Panc1 (cell line): ENCODE measurements at regions of chr20 and their contacts with region 1.

Region 1: GRCh38 chr20:49447946-49448809 is 34.3 kb downstream of the KCNB1 start:
- DNase-seq: no peak
- ATAC-seq: no peak
- H3K4me3 ChIP-seq: no peak overlapping the region
- H3K27ac ChIP-seq: no peak overlapping the region
- H3K4me1 ChIP-seq: peaks cover 14% of the 10 kb centered on the region
- H3K27me3 ChIP-seq: no peaks in the 10 kb centered on the region
- CTCF ChIP-seq: no peak

Region 2: DNA sequence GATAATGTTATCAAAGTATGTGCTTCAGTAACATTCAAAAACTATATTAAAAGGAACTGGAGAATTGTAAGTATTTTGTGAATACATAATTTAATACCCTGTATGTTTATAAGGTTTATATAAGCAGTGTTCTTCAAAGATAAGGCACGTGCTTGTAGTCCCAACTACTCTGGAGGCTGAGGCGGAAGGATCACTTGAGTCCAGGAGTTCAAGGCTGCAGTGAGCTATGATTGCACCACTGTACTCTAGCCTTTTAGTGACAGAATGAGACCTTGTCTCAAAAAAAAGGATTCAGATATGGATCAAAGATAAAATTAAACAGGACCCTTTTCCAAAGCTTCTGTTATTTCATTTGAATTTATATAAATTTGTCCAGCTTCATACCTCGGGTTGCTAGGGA is 384.9 kb before region 1 on chr20:
- CTCF ChIA-PET with region 1: no interaction called
- POLR2A ChIA-PET with region 1: no interaction called
- in situ Hi-C with region 1: no loop called
- intact Hi-C with region 1: no loop called
- DNase-seq: no peak
- ATAC-seq: no peak
- H3K4me3 ChIP-seq: no peak overlapping the region
- H3K27ac ChIP-seq: no peak overlapping the region
- H3K4me1 ChIP-seq: no peaks in the 10 kb centered on the region
- H3K27me3 ChIP-seq: no peaks in the 10 kb centered on the region
- CTCF ChIP-seq: no peak

Region 3: GRCh38 chr20:49460916-49461315 is 12.7 kb after region 1 on chr20:
- CTCF ChIA-PET with region 1: interaction called, 12 read pairs
- POLR2A ChIA-PET with region 1: no interaction called
- in situ Hi-C with region 1: no loop called
- intact Hi-C with region 1: no loop called
- DNase-seq: no peak
- ATAC-seq: no peak; the same call in 1 of the 2 replicates
- H3K4me3 ChIP-seq: no peak overlapping the region
- H3K27ac ChIP-seq: no peak overlapping the region
- H3K4me1 ChIP-seq: no peaks in the 10 kb centered on the region
- H3K27me3 ChIP-seq: no peaks in the 10 kb centered on the region
- CTCF ChIP-seq: no peak

Region 4: GRCh38 chr20:49567421-49568334 is 119.5 kb after region 1 on chr20 and contains the start of gene PTGIS:
- CTCF ChIA-PET with region 1: no interaction called
- POLR2A ChIA-PET with region 1: no interaction called
- in situ Hi-C with region 1: no loop called
- intact Hi-C with region 1: no loop called
- DNase-seq: no peak
- ATAC-seq: peak; percentile 64
- H3K4me3 ChIP-seq: peak within 1 kb of the TSS; percentile 33 to 50
- H3K27ac ChIP-seq: peak within 1 kb of the TSS; percentile 39
- H3K4me1 ChIP-seq: peaks cover 30% of the 10 kb centered on the region
- H3K27me3 ChIP-seq: no peaks in the 10 kb centered on the region
- CTCF ChIP-seq: no peak
- total RNA-seq, gene PTGIS: 4.4 TPM